Activated naive CD4-positive, alpha-beta T cell treated with anti-CD3 and anti-CD28 coated beads for 36 hours (primary cell): ENCODE measurements at regions of chr13 and their contacts with region 1.

Region 1: DNA sequence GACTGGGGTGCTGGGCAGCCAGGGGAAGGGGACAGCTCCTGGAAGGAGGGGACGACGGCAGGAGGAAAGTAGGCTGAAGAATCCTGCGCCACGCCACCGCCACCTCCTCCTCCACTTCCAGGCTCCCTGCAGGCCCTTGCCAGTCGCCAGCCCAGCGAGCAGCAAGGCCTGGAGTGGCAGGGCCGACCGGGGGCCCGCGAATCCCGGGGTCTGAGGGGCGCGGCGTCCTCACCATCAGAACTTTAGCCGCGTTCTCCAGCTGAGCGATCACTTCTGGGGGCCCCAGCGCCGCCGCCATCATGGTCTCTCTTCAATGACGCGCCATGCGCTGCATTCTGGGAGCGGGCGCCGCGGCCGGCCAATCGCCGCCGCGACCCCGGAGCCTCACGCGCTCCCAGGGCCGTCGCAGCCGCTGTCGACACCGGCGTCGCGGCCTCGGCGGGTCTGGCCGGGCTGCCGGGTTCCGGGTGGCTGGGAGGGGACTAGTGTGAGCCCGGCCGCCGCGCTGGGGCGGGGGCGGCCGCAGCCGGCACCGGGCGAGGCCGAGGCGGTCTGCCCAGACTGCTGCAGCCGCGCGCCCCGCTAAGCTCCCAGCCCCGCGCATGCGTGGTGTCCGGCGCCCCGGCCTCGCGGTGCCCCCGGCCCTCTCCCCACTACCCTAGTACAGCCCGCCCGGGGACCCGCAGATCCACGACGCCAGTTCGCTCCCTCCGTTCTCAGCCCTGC is at the start of gene XPO4:
- DNase-seq: peak; percentile 83
- H3K4me3 Mint-ChIP-seq: peak within 1 kb of the TSS; percentile 95
- H3K27ac Mint-ChIP-seq: peak within 1 kb of the TSS; percentile 95
- H3K4me1 Mint-ChIP-seq: peaks cover 29% of the 10 kb centered on the region
- H3K27me3 Mint-ChIP-seq: no peaks in the 10 kb centered on the region
- total RNA-seq, gene XPO4: 20.4 to 21.2 TPM

Region 2: GRCh38 chr13:20192158-20192835 is 710.3 kb before region 1 on chr13:
- CTCF ChIA-PET with region 1: no interaction called
- intact Hi-C with region 1: loop called (anchors 2 kb)
- DNase-seq: peak; percentile 50
- H3K4me3 Mint-ChIP-seq: peak overlapping the region; percentile 65
- H3K27ac Mint-ChIP-seq: no peak overlapping the region
- H3K4me1 Mint-ChIP-seq: peaks cover 13% of the 10 kb centered on the region
- H3K27me3 Mint-ChIP-seq: peaks cover 45% of the 10 kb centered on the region

Region 3: DNA sequence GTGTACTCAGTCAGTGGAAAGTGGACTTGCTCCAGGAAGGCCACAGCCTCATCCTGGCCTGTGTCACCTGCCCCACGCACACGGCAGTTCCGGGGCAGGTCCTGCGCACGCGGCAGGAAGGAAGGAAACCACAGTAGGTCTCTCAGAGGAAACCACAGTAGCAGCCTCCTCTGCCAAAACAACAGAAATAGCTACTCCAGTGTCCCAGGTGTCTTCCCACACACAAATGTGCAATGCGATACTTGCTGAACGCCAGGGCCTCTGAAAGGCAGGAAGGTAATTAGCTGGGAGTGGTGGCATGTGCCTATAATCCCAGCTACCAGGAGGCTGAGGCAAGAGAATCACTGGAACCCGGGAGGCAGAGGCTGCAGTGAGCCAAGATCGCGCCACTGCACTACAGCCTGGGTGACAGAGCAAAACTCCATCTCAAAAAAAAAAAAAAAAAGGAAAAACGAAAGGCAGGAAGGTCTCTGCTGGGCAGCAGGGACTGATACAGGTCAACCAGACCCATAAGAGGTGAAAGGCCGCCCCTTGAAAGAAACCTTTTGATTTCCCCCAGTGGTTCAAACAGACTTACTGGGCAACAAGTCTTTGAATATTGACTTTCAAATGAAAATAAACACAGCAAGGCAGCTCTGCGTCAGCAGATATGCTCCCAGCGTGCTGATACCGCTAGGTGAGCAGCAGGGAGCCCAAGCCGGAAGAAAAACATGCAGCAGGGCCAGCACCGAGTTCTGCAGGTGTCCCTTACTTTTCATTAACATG is 426.5 kb before region 1 on chr13:
- CTCF ChIA-PET with region 1: no interaction called
- intact Hi-C with region 1: loop called (anchors 2 kb)
- DNase-seq: peak; percentile 82
- H3K4me3 Mint-ChIP-seq: peak overlapping the region; percentile 65
- H3K27ac Mint-ChIP-seq: peak overlapping the region; percentile 92
- H3K4me1 Mint-ChIP-seq: peaks cover 27% of the 10 kb centered on the region
- H3K27me3 Mint-ChIP-seq: no peaks in the 10 kb centered on the region

Region 4: DNA sequence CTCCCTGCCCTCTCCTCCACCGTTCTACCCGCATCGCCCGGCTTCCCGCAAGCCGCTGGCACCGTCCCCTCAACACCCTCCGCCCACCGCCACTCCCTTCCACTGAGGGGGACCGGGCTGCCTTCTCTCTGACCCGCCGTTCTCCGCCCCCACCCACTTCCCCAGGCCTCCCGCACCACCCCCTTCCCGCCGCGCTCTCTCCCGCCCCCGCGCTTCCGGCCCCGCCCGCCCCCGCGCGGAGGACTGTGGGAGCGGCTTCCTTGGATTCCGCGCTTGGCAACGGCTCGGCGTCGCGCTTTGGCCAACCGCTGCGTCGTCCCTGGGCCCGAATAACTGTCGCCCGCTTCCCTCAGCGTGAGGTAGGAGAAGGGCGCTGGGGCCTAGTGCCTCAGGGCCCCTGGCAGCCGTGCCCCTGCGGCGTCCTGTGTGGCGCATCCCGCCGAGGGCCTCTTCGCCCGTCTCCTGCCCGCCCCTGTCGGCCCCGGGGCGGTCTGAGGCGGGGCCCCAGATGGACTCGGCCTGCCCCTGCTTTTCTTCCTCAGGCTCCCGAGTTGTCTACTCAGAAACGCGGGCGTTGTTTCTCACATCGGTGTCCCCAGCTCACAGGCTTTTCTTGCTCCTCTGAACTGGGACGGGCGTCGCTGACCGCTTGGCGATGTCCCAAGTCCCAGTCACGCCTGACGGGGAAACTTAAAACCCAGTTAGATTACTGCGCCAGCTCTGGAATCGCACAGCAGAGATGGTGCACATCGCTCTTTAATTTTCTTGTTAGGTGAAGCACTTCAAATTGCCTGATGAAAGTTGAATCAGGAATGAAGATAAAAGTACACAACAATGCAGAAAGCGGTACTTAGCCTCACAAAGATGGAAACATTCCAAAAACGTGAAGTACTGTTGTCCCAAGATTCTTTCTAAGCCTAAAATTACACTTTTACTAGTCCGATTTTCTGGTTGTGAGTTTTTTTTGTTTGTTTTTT is 335.4 kb before region 1 on chr13 and contains the start of gene IFT88:
- CTCF ChIA-PET with region 1: no interaction called
- intact Hi-C with region 1: loop called (anchors 5 kb)
- DNase-seq: peak; percentile 86
- H3K4me3 Mint-ChIP-seq: peak within 1 kb of the TSS; percentile 84
- H3K27ac Mint-ChIP-seq: peak within 1 kb of the TSS; percentile 87
- H3K4me1 Mint-ChIP-seq: peaks cover 23% of the 10 kb centered on the region
- H3K27me3 Mint-ChIP-seq: no peaks in the 10 kb centered on the region
- total RNA-seq, gene IFT88: 2.7 TPM

Region 5: DNA sequence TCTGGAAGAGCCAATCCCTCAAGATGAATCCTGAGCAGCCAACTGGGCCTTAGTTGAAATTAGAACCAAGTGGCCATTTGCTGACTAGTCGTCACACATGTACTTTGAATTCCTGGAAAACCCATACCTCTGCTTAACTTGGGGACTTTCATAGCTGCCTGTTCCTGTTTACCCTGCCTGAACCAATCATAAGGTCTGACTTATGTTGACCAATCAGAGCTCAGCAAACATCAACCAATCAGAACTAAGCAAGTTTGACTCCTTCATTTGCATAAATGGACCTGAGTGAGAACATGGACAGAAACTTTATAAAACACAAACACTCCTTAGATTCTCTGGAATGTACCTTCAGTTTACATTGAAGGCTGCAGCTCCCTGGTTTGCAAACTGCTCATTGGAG is 108.0 kb after region 1 on chr13:
- CTCF ChIA-PET with region 1: no interaction called
- intact Hi-C with region 1: no loop called
- DNase-seq: no peak
- H3K4me3 Mint-ChIP-seq: no peak overlapping the region
- H3K27ac Mint-ChIP-seq: no peak overlapping the region
- H3K4me1 Mint-ChIP-seq: peaks cover 3% of the 10 kb centered on the region
- H3K27me3 Mint-ChIP-seq: peaks cover 2% of the 10 kb centered on the region

Region 6: GRCh38 chr13:21022056-21022979 is 119.7 kb after region 1 on chr13:
- CTCF ChIA-PET with region 1: no interaction called
- intact Hi-C with region 1: no loop called
- DNase-seq: no peak
- H3K4me3 Mint-ChIP-seq: no peak overlapping the region
- H3K27ac Mint-ChIP-seq: no peak overlapping the region
- H3K4me1 Mint-ChIP-seq: peaks cover 3% of the 10 kb centered on the region
- H3K27me3 Mint-ChIP-seq: no peaks in the 10 kb centered on the region